PC-3 (cell line): ENCODE measurements at regions of chr2 and their contacts with region 1.

Region 1: GRCh38 chr2:138712212-138712979 is 67.8 kb downstream of the NXPH2 start:
- DNase-seq: peak; percentile 40
- ATAC-seq: peak; percentile 35; the same call in 1 of the 2 replicates
- H3K4me3 ChIP-seq: no peak overlapping the region
- H3K27ac ChIP-seq: no peak overlapping the region
- H3K4me1 ChIP-seq: peaks cover 10% of the 10 kb centered on the region
- H3K27me3 ChIP-seq: no peaks in the 10 kb centered on the region
- CTCF ChIP-seq: no peak

Region 2: GRCh38 chr2:137900421-137901141 is 811.8 kb before region 1 on chr2:
- CTCF ChIA-PET with region 1: no interaction called
- POLR2A ChIA-PET with region 1: no interaction called
- intact Hi-C with region 1: loop called (anchors 10 kb)
- DNase-seq: no peak
- ATAC-seq: no peak
- H3K4me3 ChIP-seq: no peak overlapping the region
- H3K27ac ChIP-seq: no peak overlapping the region
- H3K4me1 ChIP-seq: no peaks in the 10 kb centered on the region
- H3K27me3 ChIP-seq: peaks cover 3% of the 10 kb centered on the region; the same call in 1 of the 2 replicates
- CTCF ChIP-seq: no peak